Dendritic cell treated with granulocyte-macrophage colony-stimulating factor and Interleukin-4, amounts not matched to agents 40 ng/mL and 50 ng/mL, for 4 days (primary cell): ENCODE measurements at regions of chr9 and their contacts with region 1.

Region 1: GRCh38 chr9:112074250-112075008 is 100.7 kb downstream of the SUSD1 start:
- H3K4me3 Mint-ChIP-seq: no peak overlapping the region
- H3K27ac Mint-ChIP-seq: peak overlapping the region; percentile 78
- H3K4me1 Mint-ChIP-seq: peaks cover 72% of the 10 kb centered on the region
- H3K27me3 Mint-ChIP-seq: no peaks in the 10 kb centered on the region

Region 2: DNA sequence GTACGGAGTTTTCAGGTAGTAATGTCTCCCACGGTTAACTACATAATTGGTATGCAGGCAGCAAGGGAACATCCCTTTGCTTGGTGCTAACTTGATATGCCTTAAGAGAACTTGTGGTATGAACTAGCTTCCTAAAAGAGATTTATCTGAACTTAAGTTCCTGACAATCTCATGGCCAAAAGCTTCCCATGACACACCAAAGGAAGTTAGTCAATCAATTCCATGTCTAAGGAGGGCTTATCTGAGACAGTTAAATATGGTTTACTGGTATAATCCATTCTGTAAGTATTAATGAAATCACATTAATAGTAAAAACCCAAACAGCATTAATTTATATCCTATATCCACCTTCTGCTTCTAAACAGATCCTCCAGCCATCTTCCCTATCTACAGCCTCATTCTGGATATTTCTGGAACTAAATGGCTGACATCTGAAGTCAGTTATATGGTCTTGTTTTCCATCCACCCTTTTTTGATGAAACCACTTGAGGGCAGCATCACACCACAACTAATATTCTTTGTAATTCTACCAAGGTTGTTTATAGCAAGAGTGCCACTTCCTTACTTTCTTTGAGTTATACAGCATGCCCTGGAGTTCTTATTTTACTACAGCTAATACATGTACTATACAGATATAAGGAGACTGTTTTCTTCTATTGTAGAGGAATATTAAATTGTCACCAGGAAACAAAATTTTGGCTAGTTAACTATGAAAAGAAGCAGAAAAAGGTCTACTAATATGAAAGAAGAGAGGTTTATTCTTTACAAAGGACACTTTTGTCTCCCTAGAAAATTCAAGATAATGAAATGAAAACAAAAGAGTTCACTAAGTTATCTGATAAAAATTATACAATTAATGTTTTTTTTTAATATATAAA is 314.4 kb before region 1 on chr9:
- intact Hi-C with region 1: loop called (anchors 1 kb)
- H3K4me3 Mint-ChIP-seq: no peak overlapping the region
- H3K27ac Mint-ChIP-seq: no peak overlapping the region
- H3K4me1 Mint-ChIP-seq: no peaks in the 10 kb centered on the region
- H3K27me3 Mint-ChIP-seq: no peaks in the 10 kb centered on the region

Region 3: DNA sequence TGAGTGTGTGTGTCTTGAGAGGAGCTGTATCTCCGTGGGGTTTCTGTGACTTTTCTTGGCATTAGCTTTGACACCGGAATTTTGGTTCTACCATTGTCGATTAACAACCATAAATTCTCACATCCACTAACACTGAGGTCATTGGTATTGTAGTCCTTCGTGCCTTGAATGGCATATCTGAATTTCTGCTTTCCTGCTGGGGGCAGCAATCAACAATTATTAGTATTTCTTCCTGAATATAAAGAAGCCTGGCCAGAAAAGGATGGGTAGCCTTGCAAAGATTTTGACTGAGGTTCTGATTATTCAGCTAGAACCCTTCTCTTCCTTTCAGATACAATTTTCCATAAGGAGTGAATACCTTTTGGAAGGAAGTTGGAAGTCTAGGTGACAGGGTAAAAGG is 246.2 kb before region 1 on chr9:
- intact Hi-C with region 1: loop called (anchors 10 kb)
- H3K4me3 Mint-ChIP-seq: no peak overlapping the region
- H3K27ac Mint-ChIP-seq: no peak overlapping the region
- H3K4me1 Mint-ChIP-seq: peaks cover 5% of the 10 kb centered on the region
- H3K27me3 Mint-ChIP-seq: peaks cover 10% of the 10 kb centered on the region

Region 4: DNA sequence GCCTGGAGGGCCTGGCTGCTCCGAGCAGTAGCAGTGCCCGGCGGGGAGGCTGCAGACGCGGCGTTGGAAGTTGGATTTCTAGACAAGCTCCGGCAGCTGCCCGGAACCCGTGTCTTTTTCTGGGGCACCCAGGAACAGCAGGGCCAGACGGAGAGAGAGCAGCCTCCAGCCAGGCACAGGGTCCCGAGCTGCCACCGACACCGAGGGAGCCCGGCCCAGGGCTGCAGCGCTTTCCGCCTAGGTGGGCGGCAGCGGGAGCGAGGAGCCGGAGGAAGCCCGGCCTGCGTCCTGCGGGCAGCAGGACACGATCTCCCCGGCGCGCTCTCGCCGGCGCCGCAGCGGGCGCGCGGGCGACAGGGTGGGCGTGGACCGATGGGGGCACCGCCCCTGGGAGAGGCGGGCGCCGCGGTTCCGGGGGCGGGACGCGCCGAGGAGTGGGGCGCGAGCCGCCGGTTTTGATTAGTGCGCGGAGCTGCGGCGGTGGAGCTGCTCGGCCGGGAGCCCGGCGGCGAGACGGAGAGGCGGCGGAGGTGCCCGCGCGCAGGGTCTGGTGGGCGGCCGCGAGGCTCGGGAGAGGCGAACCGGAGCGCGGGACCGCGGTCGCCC is 178.0 kb before region 1 on chr9 and contains the start of gene UGCG:
- intact Hi-C with region 1: loop called (anchors 5 kb)
- H3K4me3 Mint-ChIP-seq: peak within 1 kb of the TSS; percentile 89
- H3K27ac Mint-ChIP-seq: no peak within 1 kb of the TSS
- H3K4me1 Mint-ChIP-seq: peaks cover 4% of the 10 kb centered on the region
- H3K27me3 Mint-ChIP-seq: peaks cover 8% of the 10 kb centered on the region

Region 5: DNA sequence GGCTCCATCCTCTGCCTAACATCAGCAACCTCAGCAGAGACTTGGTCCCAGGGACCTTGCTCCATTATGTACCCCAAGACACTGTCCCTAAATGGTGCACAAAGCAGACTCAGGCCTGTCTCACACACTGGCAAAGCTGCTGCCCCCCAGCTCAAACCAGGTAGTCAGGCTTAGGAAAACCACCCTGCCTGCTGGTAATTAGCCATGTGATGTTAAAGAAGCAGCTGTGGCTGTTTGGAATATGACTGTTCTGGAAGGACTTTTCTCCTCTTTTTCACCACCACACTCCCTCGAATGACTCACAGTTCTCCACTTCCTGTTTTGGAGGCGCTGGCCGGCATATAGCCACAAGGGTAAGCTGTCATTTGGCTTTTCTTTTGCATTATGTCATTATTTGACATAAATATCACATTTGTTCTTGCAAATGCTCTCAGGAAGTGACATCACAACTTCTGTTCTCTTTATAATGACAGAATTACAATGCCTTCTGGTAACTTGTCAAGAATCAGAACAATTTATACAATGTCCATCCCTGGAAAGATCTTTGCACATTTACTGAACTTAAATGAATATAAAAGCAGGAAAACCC is 13.2 kb before region 1 on chr9:
- intact Hi-C with region 1: loop called (anchors 1 kb)
- H3K4me3 Mint-ChIP-seq: no peak overlapping the region
- H3K27ac Mint-ChIP-seq: peak overlapping the region; percentile 82
- H3K4me1 Mint-ChIP-seq: peaks cover 82% of the 10 kb centered on the region
- H3K27me3 Mint-ChIP-seq: no peaks in the 10 kb centered on the region